ENCODE measurements at regions of chr3 and their contacts with region 1.

Region 1: GRCh38 chr3:50542177-50543034 is 25.1 kb downstream of the C3orf18 start:
- DNase-seq: peak; percentile 63
- H3K4me3 ChIP-seq: no peak overlapping the region
- H3K27ac ChIP-seq: no peak overlapping the region
- H3K4me1 ChIP-seq: no peaks in the 10 kb centered on the region
- H3K27me3 ChIP-seq: peaks cover 3 to 5% of the 10 kb centered on the region in 2 experiments
- CTCF ChIP-seq: peak; percentile 83 to 87
- POLR2A ChIP-seq: no peak

Region 2: GRCh38 chr3:50337191-50337841 is 205.1 kb before region 1 on chr3:
- CTCF ChIA-PET with region 1: interaction called, 15 read pairs
- POLR2A ChIA-PET with region 1: interaction called, 3 read pairs
- dilution Hi-C with region 1: no loop called
- intact Hi-C with region 1: no loop called
- DNase-seq: peak; percentile 99
- H3K4me3 ChIP-seq: peak overlapping the region; percentile 85 to 93 (median 90)
- H3K27ac ChIP-seq: peak overlapping the region; percentile 95
- H3K4me1 ChIP-seq: peaks cover 43% of the 10 kb centered on the region
- H3K27me3 ChIP-seq: no peaks in the 10 kb centered on the region
- CTCF ChIP-seq: no peak
- POLR2A ChIP-seq: peak; percentile 63

Region 3: DNA sequence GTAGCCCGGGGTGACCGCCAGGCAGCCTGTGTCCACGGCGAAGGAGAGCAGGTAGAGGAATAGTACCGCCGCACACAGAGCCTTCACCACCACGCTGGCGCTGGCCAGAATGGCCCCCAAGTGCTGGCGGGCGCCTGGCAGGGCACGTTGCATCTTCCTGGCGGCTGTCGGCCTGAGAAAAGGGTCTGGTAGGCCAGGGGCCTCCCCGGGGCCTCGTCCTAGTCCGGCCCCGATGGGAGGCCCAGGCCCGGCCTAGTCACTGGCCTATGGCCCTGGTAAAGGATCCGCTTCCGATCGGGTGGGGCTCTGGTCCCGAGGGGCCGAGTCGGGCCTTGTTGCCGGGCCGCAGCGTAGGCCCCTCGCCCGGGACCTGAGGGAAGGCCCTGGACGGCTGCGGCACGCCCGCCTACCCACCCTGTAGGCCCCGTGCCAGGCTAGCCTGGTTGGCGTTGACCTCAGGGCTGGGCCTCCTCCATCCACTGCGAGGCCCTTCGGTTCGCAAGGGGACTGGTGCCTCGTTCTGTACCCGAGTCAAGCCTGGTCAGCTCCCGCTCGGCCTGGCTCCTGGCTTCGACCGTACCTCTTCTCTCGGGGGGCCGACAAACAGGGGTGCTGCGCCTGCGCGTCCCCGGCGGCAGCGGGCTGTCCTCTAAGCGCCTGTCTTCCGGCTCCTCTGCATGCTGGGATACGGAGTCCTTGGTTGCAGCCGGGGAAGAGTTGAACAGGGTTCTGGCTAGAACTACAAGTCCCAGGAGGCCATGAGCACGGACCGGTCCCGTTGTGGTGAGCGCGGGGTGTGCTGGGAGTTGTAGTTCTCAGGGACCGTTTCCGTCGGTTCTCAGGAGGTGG is 183.3 kb before region 1 on chr3 and contains the start of gene TMEM115:
- CTCF ChIA-PET with region 1: interaction called, 14 read pairs
- POLR2A ChIA-PET with region 1: no interaction called
- dilution Hi-C with region 1: no loop called
- intact Hi-C with region 1: no loop called
- DNase-seq: peak; percentile 98
- H3K4me3 ChIP-seq: peak within 1 kb of the TSS; percentile 26 to 83 (median 63)
- H3K27ac ChIP-seq: peak within 1 kb of the TSS; percentile 52
- H3K4me1 ChIP-seq: peaks cover 31% of the 10 kb centered on the region
- H3K27me3 ChIP-seq: no peaks in the 10 kb centered on the region
- CTCF ChIP-seq: no peak
- POLR2A ChIP-seq: peak; percentile 85
- total RNA-seq, gene TMEM115: 43.2 and 44.7 TPM in 2 replicates

Region 4: GRCh38 chr3:50430950-50431435 is 111.4 kb before region 1 on chr3:
- CTCF ChIA-PET with region 1: interaction called, 27 read pairs
- POLR2A ChIA-PET with region 1: no interaction called
- dilution Hi-C with region 1: no loop called
- intact Hi-C with region 1: loop called (anchors 1 kb)
- DNase-seq: no peak
- H3K4me3 ChIP-seq: no peak overlapping the region
- H3K27ac ChIP-seq: no peak overlapping the region
- H3K4me1 ChIP-seq: no peaks in the 10 kb centered on the region
- H3K27me3 ChIP-seq: no peaks in the 10 kb centered on the region
- CTCF ChIP-seq: no peak
- POLR2A ChIP-seq: no peak

Region 5: GRCh38 chr3:50474717-50475116 is 67.7 kb before region 1 on chr3:
- CTCF ChIA-PET with region 1: interaction called, 12 read pairs
- POLR2A ChIA-PET with region 1: no interaction called
- dilution Hi-C with region 1: no loop called
- intact Hi-C with region 1: no loop called
- DNase-seq: peak; percentile 20
- H3K4me3 ChIP-seq: no peak overlapping the region
- H3K27ac ChIP-seq: no peak overlapping the region
- H3K4me1 ChIP-seq: peaks cover 2% of the 10 kb centered on the region
- H3K27me3 ChIP-seq: no peaks in the 10 kb centered on the region
- CTCF ChIP-seq: no peak
- POLR2A ChIP-seq: no peak

Region 6: DNA sequence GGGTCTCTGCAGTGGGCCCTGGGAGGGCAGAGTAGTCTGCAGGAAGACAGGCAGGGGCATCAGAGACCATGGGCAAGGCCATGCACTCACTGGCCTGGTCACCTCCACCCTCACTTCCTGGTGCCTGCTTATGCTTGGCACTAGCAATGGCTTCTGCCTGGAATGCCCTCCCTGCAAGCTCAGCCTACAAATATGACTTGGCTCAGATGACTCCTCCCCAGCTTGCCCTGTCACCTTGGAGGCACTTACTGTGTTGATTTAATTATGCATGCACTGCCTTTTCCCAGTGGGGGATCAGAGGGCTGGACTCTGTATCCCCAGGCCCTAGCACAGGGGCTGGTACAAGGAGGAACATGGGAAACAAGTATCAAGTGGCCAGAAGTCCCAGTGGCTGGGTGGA is 17.3 kb after region 1 on chr3:
- CTCF ChIA-PET with region 1: interaction called, 36 read pairs
- POLR2A ChIA-PET with region 1: no interaction called
- dilution Hi-C with region 1: no loop called
- intact Hi-C with region 1: no loop called
- DNase-seq: no peak
- H3K4me3 ChIP-seq: no peak overlapping the region
- H3K27ac ChIP-seq: no peak overlapping the region
- H3K4me1 ChIP-seq: no peaks in the 10 kb centered on the region
- H3K27me3 ChIP-seq: no peaks in the 10 kb centered on the region
- CTCF ChIP-seq: no peak
- POLR2A ChIP-seq: no peak

Region 7: GRCh38 chr3:50840983-50841489 is 298.6 kb after region 1 on chr3:
- CTCF ChIA-PET with region 1: no interaction called
- POLR2A ChIA-PET with region 1: no interaction called
- dilution Hi-C with region 1: no loop called
- intact Hi-C with region 1: no loop called
- DNase-seq: no peak
- H3K4me3 ChIP-seq: no peak overlapping the region
- H3K27ac ChIP-seq: no peak overlapping the region
- H3K4me1 ChIP-seq: no peaks in the 10 kb centered on the region
- H3K27me3 ChIP-seq: no peaks in the 10 kb centered on the region
- CTCF ChIP-seq: no peak
- POLR2A ChIP-seq: no peak